ENCODE measurements at regions of chr5 and their contacts with region 1.

Region 1: GRCh38 chr5:178063277-178063676 is 50.1 kb upstream of the N4BP3 start:
- DNase-seq: no peak
- ATAC-seq: no peak
- H3K4me3 ChIP-seq: no peak overlapping the region
- H3K27ac ChIP-seq: no peak overlapping the region
- H3K4me1 ChIP-seq: no peaks in the 10 kb centered on the region
- H3K27me3 ChIP-seq: peaks cover 0 to 34% (median 0%) of the 10 kb centered on the region in 7 donors
- CTCF ChIP-seq: no peak

Region 2: DNA sequence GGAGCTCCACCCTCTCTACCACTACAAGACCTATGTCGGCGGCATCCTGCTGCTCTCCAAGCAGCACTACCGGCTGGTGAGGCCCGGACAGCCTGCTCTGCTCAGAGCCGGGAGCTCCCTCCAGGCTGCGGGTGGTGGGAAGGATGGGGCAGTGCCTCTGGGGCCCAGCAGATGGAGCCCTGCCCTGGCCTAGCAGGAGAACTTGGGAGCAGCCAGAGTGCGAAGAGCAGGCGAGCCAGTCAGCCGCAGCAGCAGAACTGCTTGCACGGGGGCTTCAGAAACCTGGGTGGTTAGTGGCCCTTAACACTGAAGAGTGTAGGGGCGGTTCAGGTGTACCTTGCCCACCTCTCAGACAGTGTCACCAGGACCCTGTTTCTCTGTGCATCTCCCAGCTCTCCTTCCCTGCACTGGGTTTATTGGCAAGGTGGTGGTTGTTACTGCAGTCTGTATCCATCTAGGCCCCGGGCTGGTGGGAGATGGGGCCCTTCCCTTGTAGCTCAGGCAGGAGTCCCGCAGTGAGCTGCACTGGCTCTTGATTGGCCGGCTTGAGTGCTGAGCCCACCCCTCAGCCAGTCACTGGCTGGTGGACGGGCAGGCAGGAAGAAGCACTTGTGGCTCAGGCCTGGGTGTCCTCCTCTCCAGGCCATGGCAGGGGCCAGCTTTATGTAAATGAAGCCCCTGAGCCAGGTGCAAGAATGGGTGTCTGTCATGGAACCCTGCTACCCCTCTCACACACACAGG is 455.7 kb before region 1 on chr5:
- intact Hi-C with region 1: loop called in 1 of 10 experiments (anchors 5 kb)
- DNase-seq: peak; percentile 62 to 71
- ATAC-seq: peak; percentile 74 to 89 (median 82)
- H3K4me3 ChIP-seq: no peak overlapping the region
- H3K27ac ChIP-seq: no peak overlapping the region
- H3K4me1 ChIP-seq: peaks cover 0 to 9% (median 2%) of the 10 kb centered on the region in 9 donors
- H3K27me3 ChIP-seq: no peaks in the 10 kb centered on the region
- CTCF ChIP-seq: peak; percentile 48 to 91 (median 84)